ENCODE measurements at regions of chr1 and their contacts with region 1.

Region 1: DNA sequence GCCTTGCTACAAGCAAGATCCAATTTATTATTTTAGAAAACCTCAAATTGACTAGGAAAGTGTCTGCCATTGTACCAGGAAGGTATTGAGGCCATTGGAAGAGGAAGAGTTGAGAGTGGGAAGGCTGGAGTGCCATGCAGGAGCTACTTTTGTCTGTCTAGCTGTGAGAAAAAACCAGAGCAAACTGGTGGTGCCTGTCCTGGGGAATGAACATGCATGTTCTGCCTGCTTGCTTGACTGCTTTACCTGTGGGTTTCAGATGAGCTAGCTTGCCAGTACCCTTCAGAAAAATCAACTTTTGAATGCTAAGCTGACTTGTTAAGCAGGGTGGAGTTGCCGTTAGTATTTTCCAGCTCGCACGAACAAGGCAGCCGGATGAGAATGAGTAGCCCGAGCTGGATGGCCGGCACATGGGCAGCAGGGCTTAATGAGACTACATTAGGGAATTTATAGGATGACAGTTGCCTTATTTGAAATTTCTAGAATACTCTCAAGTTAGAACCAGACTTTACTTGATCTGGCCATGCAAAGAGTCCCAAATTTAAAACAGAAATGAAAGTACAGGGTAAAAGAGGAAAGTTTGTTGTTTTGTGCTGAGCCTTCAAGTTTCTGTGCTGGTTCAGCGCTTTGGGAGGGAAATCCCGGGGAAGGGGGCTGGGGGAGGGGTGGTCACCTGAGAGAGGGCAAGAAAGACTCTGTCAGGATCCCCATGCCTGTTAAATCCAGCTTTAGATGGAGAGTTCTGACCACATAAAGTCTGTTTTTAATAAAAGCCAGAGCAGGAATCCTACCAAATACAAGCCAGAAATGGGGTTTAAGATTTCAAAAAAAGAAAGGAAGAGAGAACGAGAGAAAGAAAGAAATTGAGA is 29.6 kb upstream of the C1orf105 start:
- DNase-seq: peak; percentile 82
- ATAC-seq: peak; percentile 58
- H3K4me3 ChIP-seq: peak overlapping the region in 4 of 5 experiments; percentile 43 to 77 (median 62)
- H3K4me3 Mint-ChIP-seq: peak overlapping the region; percentile 94
- H3K27ac ChIP-seq: peak overlapping the region; percentile 97 to 98
- H3K27ac Mint-ChIP-seq: peak overlapping the region; percentile 99
- H3K4me1 ChIP-seq: peaks cover 58 to 65% of the 10 kb centered on the region in 2 donors
- H3K4me1 Mint-ChIP-seq: peaks cover 62% of the 10 kb centered on the region
- H3K27me3 ChIP-seq: no peaks in the 10 kb centered on the region
- H3K27me3 Mint-ChIP-seq: no peaks in the 10 kb centered on the region
- CTCF ChIP-seq: no peak

Region 2: GRCh38 chr1:172343240-172344160 is 47.4 kb before region 1 on chr1:
- CTCF ChIA-PET with region 1: interaction called, 13 read pairs
- POLR2A ChIA-PET with region 1: no interaction called
- intact Hi-C with region 1: loop called (anchors 2 kb)
- DNase-seq: peak; percentile 45
- ATAC-seq: peak; percentile 51
- H3K4me3 ChIP-seq: peak overlapping the region in 2 of 5 experiments; percentile 6 to 27
- H3K4me3 Mint-ChIP-seq: peak overlapping the region; percentile 71
- H3K27ac ChIP-seq: peak overlapping the region; percentile 42 to 48
- H3K27ac Mint-ChIP-seq: peak overlapping the region; percentile 79
- H3K4me1 ChIP-seq: peaks cover 34 to 45% of the 10 kb centered on the region in 2 donors
- H3K4me1 Mint-ChIP-seq: peaks cover 60% of the 10 kb centered on the region
- H3K27me3 ChIP-seq: no peaks in the 10 kb centered on the region
- H3K27me3 Mint-ChIP-seq: no peaks in the 10 kb centered on the region
- CTCF ChIP-seq: no peak

Region 3: DNA sequence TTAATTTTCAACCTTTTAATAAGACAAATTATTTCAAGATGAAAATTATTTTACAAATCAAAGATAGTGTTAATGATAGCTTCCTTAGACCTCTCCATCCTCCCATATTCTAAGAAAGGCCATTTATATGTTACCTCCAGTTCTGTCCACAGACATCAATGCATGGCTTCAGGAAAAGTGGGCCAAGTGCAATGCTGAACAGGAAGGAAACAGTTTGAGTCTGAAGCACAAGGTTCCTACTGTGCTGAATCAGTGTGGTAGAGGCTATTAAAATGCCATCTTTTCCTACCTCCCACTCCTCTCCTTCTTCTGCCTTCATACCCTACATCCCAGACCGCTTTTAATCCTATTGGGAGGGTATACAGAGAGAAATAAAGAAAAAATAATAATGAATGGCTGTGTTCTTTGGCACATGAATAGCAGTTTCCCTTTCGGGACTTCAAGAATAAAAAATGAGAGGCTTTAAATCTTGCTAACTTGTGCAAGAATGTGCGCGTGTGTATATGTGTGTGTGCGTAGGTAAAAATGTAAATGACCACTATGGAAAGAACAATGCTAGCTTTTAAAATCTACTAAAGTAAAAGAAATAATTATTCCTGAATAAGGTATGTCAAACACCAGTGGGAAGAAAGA is 33.0 kb before region 1 on chr1:
- CTCF ChIA-PET with region 1: interaction called, 14 read pairs
- POLR2A ChIA-PET with region 1: interaction called, 26 read pairs
- intact Hi-C with region 1: loop called (anchors 2 kb)
- DNase-seq: no peak
- ATAC-seq: peak; percentile 20
- H3K4me3 ChIP-seq: peak overlapping the region in 1 of 5 experiments; percentile 17
- H3K4me3 Mint-ChIP-seq: peak overlapping the region; percentile 36
- H3K27ac ChIP-seq: peak overlapping the region; percentile 67 to 81
- H3K27ac Mint-ChIP-seq: peak overlapping the region; percentile 83
- H3K4me1 ChIP-seq: peaks cover 43 to 54% of the 10 kb centered on the region in 2 donors
- H3K4me1 Mint-ChIP-seq: peaks cover 56% of the 10 kb centered on the region
- H3K27me3 ChIP-seq: no peaks in the 10 kb centered on the region
- H3K27me3 Mint-ChIP-seq: no peaks in the 10 kb centered on the region
- CTCF ChIP-seq: no peak

Region 4: GRCh38 chr1:172373864-172374263 is 17.1 kb before region 1 on chr1:
- CTCF ChIA-PET with region 1: interaction called, 23 read pairs
- POLR2A ChIA-PET with region 1: interaction called, 13 read pairs
- intact Hi-C with region 1: no loop called
- DNase-seq: no peak
- ATAC-seq: no peak
- H3K4me3 ChIP-seq: no peak overlapping the region
- H3K4me3 Mint-ChIP-seq: no peak overlapping the region
- H3K27ac ChIP-seq: peak overlapping the region in 1 of 2 donors; percentile 3
- H3K27ac Mint-ChIP-seq: peak overlapping the region; percentile 38
- H3K4me1 ChIP-seq: peaks cover 2 to 12% of the 10 kb centered on the region in 2 donors
- H3K4me1 Mint-ChIP-seq: peaks cover 24% of the 10 kb centered on the region
- H3K27me3 ChIP-seq: no peaks in the 10 kb centered on the region
- H3K27me3 Mint-ChIP-seq: no peaks in the 10 kb centered on the region
- CTCF ChIP-seq: no peak

Region 5: DNA sequence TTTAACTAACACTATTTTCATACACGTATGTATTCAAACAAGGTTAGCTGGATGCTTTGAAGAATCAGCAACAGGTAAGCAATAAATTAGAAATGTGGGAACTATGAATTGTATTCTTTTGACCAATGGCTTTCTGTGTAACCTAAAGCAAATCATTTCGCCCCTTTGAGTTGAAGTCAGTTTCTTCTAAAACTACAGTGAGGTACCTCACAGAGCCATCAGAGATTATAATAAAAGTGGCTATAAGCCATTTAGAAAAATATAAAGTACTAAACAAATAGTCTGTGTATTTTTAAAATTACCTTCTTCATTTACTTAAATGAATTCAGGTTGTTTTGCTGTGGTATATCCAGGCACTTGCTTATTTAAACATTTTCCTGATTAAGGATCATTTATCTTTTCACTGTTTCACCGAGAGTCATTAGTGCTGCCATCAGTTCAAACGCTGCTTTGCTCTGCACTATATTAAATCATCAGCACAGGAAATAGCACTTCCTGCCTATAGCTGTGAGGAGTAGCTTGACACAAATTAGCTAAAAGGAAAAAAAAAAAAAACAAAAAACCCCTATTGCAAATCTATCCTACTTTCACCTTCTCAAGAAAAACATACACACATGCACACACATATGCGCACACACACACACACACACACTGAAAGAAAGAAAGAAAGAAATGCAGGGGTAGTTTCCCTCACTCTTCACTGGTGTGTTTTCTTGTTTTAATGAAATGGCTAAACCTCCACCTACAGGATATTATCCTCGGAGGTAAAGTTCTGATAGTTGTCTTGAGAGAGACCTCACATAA is 10.3 kb before region 1 on chr1:
- CTCF ChIA-PET with region 1: interaction called, 23 read pairs
- POLR2A ChIA-PET with region 1: interaction called, 10 read pairs
- intact Hi-C with region 1: loop called (anchors 1 kb)
- DNase-seq: peak; percentile 76
- ATAC-seq: peak; percentile 90
- H3K4me3 ChIP-seq: peak overlapping the region in 3 of 5 experiments; percentile 27 to 49 (median 33)
- H3K4me3 Mint-ChIP-seq: peak overlapping the region; percentile 73
- H3K27ac ChIP-seq: peak overlapping the region; percentile 76 to 89
- H3K27ac Mint-ChIP-seq: peak overlapping the region; percentile 90
- H3K4me1 ChIP-seq: peaks cover 26 to 37% of the 10 kb centered on the region in 2 donors
- H3K4me1 Mint-ChIP-seq: peaks cover 44% of the 10 kb centered on the region
- H3K27me3 ChIP-seq: no peaks in the 10 kb centered on the region
- H3K27me3 Mint-ChIP-seq: no peaks in the 10 kb centered on the region
- CTCF ChIP-seq: no peak